ENCODE measurements at regions of chr1 and their contacts with region 1.

Region 1: DNA sequence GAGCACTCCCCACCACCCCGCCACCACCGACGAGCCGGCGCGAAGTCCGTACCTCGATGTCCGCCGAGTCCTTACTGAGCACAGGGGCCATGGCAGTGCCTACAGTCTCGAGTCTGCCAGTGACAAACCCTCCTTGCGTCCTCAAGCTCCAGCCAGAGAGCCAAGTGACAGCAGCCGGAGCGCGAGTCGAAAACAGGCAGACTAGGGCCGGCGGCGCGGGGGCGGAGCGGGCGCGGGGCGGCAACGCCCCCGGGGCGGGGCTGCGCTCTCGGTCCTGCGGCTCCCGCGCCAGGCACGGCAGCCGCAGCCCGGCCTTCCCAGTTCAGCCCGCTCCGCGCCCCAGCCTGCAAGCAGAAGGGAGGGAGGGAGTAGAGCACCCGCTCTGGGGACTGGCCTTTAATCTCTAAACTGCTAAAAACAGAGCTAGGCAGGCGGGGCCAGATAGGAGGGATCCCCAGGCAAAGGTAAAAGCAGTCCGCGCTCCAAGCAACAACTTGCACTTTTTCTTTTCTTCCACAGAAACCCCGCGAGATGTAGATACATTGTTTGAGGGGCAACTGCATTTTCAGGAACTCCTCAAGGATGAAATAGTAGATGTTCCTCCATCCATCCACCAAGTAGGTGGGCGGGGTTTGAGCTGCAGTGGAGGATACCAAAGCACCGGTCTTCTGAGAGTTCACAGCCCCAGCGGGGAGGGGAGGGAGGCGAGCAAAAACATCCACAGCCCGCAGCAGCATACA is at the start of gene DPYD:
- DNase-seq: peak; percentile 75 to 90 (median 85)
- ATAC-seq: peak; percentile 84
- H3K4me3 ChIP-seq: peak within 1 kb of the TSS; percentile 85 to 95
- H3K4me3 Mint-ChIP-seq: peak within 1 kb of the TSS; percentile 98
- H3K27ac ChIP-seq: peak within 1 kb of the TSS; percentile 84 to 86
- H3K27ac Mint-ChIP-seq: peak within 1 kb of the TSS; percentile 97
- H3K4me1 ChIP-seq: peaks cover 29% of the 10 kb centered on the region
- H3K4me1 Mint-ChIP-seq: peaks cover 48% of the 10 kb centered on the region
- H3K27me3 ChIP-seq: no peaks in the 10 kb centered on the region
- H3K27me3 Mint-ChIP-seq: no peaks in the 10 kb centered on the region
- CTCF ChIP-seq: no peak
- total RNA-seq, gene DPYD: 24.2 to 24.9 TPM

Region 2: DNA sequence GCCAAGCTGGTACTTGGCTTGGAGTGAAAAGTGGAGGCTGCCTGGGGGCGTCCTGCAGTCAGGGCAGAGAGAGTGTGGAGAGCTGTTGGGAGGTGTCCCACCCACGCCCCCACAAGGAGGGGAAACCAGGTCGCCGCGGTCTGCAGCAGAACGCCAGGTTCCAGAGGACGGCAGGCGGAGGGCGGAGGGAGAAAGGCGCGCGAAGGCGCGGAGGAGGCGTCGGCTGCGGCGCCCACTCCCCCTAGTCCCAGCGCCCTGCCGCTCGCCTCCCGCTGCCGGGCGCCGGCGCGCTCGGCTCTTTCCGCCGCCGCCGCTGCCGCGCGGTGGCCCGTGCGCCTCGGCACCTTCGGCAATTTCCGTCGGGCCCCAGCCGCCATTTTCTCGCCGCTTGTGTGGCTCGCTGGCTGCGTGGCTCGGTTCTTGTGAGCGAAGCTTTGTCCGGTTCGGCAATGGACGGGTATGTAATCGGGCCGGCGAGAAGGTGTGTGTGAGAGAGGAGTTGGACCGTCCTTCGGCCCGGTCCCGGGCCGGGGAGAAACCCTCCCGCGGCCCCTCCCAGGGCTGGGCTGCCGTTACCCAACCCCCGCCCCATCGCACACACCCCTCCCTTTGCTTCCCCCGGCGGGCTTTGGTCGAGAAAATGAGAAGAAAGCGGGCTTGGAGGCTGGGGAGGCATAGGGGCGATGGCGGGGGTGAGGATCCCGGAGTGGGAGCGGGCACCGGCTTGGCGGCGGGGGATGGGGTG is 1199.4 kb before region 1 on chr1 and contains the start of gene PTBP2:
- CTCF ChIA-PET with region 1: no interaction called
- POLR2A ChIA-PET with region 1: no interaction called
- intact Hi-C with region 1: loop called (anchors 5 kb)
- DNase-seq: peak; percentile 67 to 90 (median 82)
- ATAC-seq: peak; percentile 87
- H3K4me3 ChIP-seq: peak within 1 kb of the TSS; percentile 98 to 100
- H3K4me3 Mint-ChIP-seq: peak within 1 kb of the TSS; percentile 91
- H3K27ac ChIP-seq: peak within 1 kb of the TSS; percentile 88 to 89
- H3K27ac Mint-ChIP-seq: peak within 1 kb of the TSS; percentile 96
- H3K4me1 ChIP-seq: peaks cover 22% of the 10 kb centered on the region
- H3K4me1 Mint-ChIP-seq: peaks cover 28% of the 10 kb centered on the region
- H3K27me3 ChIP-seq: no peaks in the 10 kb centered on the region
- H3K27me3 Mint-ChIP-seq: no peaks in the 10 kb centered on the region
- CTCF ChIP-seq: no peak
- total RNA-seq, gene PTBP2: 30.6 to 32.9 TPM

Region 3: DNA sequence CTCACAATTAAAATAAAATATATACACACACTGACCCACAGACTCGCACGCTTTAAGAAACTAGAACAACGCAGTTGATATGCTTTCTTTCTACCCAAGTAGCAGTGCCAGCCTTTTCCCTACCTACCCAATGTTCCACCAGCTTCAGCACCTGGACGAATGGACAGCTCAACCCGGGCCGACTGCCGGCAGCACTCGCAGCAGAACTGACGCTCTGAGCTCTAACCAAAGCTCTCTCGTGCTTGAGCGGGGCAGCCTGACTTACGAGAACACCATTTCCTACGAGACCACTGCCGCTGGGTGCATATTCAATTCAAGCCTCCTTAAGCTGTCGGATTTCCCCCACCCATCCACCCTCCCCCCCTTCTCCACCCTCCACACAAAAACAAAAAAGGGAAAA is 127.2 kb after region 1 on chr1:
- CTCF ChIA-PET with region 1: no interaction called
- POLR2A ChIA-PET with region 1: interaction called, 3 read pairs
- intact Hi-C with region 1: loop called in 1 of 2 experiments (anchors 2 kb)
- DNase-seq: peak; percentile 38 to 74 (median 66)
- ATAC-seq: peak; percentile 88
- H3K4me3 ChIP-seq: no peak overlapping the region
- H3K4me3 Mint-ChIP-seq: no peak overlapping the region
- H3K27ac ChIP-seq: no peak overlapping the region
- H3K27ac Mint-ChIP-seq: no peak overlapping the region
- H3K4me1 ChIP-seq: peaks cover 22% of the 10 kb centered on the region
- H3K4me1 Mint-ChIP-seq: peaks cover 41% of the 10 kb centered on the region
- H3K27me3 ChIP-seq: peaks cover 32 to 53% of the 10 kb centered on the region in 2 experiments
- H3K27me3 Mint-ChIP-seq: peaks cover 84% of the 10 kb centered on the region
- CTCF ChIP-seq: no peak

Measured in CD8-positive, alpha-beta T cell (primary cell).